ENCODE measurements at regions of chr14 and their contacts with region 1.

Region 1: GRCh38 chr14:20855652-20856291 is 35.4 kb upstream of the RNASE3 start:
- DNase-seq: peak; percentile 84
- ATAC-seq: peak; percentile 99
- H3K4me3 ChIP-seq: no peak overlapping the region
- H3K4me3 Mint-ChIP-seq: no peak overlapping the region
- H3K27ac ChIP-seq: no peak overlapping the region
- H3K27ac Mint-ChIP-seq: no peak overlapping the region
- H3K4me1 ChIP-seq: peaks cover 3 to 7% of the 10 kb centered on the region in 2 donors
- H3K4me1 Mint-ChIP-seq: peaks cover 11% of the 10 kb centered on the region
- H3K27me3 ChIP-seq: peaks cover 0 to 18% (median 12%) of the 10 kb centered on the region in 4 experiments
- H3K27me3 Mint-ChIP-seq: peaks cover 30% of the 10 kb centered on the region
- CTCF ChIP-seq: peak; percentile 86

Region 2: DNA sequence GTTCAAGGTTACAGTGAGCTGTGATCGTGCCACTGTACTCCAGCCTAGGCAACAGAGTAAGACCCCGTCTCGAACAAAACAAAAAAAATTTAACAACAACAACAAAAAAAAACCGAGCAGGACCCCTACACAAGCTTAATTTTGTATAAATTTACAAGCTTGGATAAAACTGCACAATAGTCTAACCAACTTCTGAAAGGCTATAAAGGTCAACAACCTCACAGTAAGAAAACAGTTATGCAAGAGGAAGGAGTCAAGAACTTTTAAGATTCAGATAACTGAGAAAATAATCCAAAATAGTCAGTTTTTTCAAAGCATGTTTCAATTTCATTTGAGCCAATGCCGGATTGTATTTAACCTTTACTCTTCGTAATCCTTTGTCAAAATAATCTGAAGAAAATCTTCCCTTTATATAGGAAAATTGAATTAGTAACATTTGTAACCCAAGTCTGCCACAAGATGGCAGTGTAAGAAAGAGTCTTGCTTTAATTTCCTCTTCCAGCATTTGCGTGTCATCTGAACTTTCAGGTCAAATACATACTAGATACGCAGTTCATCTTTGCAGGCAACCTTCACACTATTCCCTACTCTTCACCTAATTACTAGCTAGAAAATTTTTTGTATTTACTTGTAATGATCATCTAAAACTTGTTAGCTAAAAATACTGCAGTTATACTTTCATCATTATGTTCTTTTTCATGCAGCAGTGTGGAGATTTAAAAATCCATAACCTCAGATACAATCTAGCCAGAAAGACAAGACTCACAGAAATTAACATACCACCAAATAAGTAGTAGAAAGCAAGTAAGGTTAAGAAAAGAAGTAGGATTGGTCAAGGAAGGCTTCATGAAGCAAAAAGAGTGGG is 528.5 kb before region 1 on chr14:
- CTCF ChIA-PET with region 1: interaction called, 4 read pairs
- POLR2A ChIA-PET with region 1: no interaction called
- intact Hi-C with region 1: loop called (anchors 5 kb)
- DNase-seq: peak; percentile 81
- ATAC-seq: peak; percentile 67
- H3K4me3 ChIP-seq: no peak overlapping the region
- H3K4me3 Mint-ChIP-seq: peak overlapping the region; percentile 1
- H3K27ac ChIP-seq: no peak overlapping the region
- H3K27ac Mint-ChIP-seq: peak overlapping the region; percentile 33
- H3K4me1 ChIP-seq: peaks cover under 1 to 6% of the 10 kb centered on the region in 2 donors
- H3K4me1 Mint-ChIP-seq: peaks cover 30% of the 10 kb centered on the region
- H3K27me3 ChIP-seq: no peaks in the 10 kb centered on the region
- H3K27me3 Mint-ChIP-seq: no peaks in the 10 kb centered on the region
- CTCF ChIP-seq: peak; percentile 91

Region 3: DNA sequence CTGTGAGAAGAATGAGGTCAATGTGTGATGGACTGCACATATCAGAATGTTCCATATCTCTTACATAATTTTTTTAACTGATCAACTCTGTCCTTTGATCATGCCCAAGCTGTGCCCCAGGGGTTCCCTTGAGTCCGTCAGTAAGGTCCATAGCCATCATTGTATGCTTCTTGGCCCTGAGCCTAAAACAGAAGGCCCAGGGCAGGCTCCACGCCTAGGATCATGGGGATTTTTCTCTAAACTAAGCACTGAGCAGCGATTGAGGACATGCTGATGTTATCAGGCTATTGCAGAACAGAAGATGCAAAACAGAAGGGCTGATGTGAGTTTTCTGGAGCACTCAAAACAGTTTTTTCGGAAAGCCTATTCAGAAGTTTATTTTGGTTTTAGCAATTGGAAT is 315.9 kb before region 1 on chr14:
- CTCF ChIA-PET with region 1: no interaction called
- POLR2A ChIA-PET with region 1: no interaction called
- intact Hi-C with region 1: no loop called
- DNase-seq: no peak
- ATAC-seq: no peak
- H3K4me3 ChIP-seq: no peak overlapping the region
- H3K4me3 Mint-ChIP-seq: no peak overlapping the region
- H3K27ac ChIP-seq: no peak overlapping the region
- H3K27ac Mint-ChIP-seq: no peak overlapping the region
- H3K4me1 ChIP-seq: no peaks in the 10 kb centered on the region
- H3K4me1 Mint-ChIP-seq: no peaks in the 10 kb centered on the region
- H3K27me3 ChIP-seq: no peaks in the 10 kb centered on the region
- H3K27me3 Mint-ChIP-seq: peaks cover 25% of the 10 kb centered on the region
- CTCF ChIP-seq: no peak

Region 4: GRCh38 chr14:20690848-20691523 is 164.8 kb before region 1 on chr14:
- CTCF ChIA-PET with region 1: interaction called, 140 read pairs
- POLR2A ChIA-PET with region 1: no interaction called
- intact Hi-C with region 1: no loop called
- DNase-seq: peak; percentile 83
- ATAC-seq: peak; percentile 97
- H3K4me3 ChIP-seq: no peak overlapping the region
- H3K4me3 Mint-ChIP-seq: no peak overlapping the region
- H3K27ac ChIP-seq: no peak overlapping the region
- H3K27ac Mint-ChIP-seq: no peak overlapping the region
- H3K4me1 ChIP-seq: peaks cover 0 to 3% of the 10 kb centered on the region in 2 donors
- H3K4me1 Mint-ChIP-seq: peaks cover 5% of the 10 kb centered on the region
- H3K27me3 ChIP-seq: no peaks in the 10 kb centered on the region
- H3K27me3 Mint-ChIP-seq: no peaks in the 10 kb centered on the region
- CTCF ChIP-seq: peak; percentile 99

Region 5: DNA sequence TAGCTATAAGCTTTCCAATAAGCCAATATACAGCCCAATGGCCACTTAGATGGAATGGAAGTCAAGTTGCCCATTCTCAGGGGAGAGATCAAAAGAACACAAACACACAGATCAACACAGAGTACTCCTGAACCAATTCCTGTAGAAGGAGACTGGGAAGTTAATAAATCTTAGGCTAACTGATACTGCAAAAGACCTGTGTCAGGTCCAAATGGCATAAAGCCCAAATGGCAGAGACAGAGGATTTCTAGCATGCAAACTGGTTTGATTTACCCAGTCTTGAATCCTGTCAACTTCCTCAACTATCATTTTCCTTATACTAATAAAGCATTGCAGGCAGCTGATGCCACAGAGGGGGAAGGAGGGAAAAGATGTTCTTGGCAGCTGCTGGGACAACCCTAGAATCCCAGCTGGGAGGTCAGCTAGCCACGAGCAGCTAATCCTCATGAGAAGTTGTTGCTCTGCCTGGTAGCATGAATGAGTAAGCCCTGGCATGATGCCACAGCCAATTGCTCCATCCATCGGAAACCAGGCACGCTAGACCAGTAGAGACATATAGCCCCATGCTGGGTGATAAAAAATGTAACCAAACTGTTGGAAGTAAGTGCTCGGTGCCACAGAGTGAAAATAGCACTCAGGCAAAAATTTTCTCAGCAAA is 141.1 kb before region 1 on chr14:
- CTCF ChIA-PET with region 1: interaction called, 15 read pairs
- POLR2A ChIA-PET with region 1: no interaction called
- intact Hi-C with region 1: no loop called
- DNase-seq: no peak
- ATAC-seq: no peak
- H3K4me3 ChIP-seq: peak overlapping the region in 1 of 5 experiments; percentile 27
- H3K4me3 Mint-ChIP-seq: peak overlapping the region; percentile 59
- H3K27ac ChIP-seq: peak overlapping the region; percentile 86 to 87
- H3K27ac Mint-ChIP-seq: peak overlapping the region; percentile 97
- H3K4me1 ChIP-seq: peaks cover 23 to 66% of the 10 kb centered on the region in 2 donors
- H3K4me1 Mint-ChIP-seq: peaks cover 60% of the 10 kb centered on the region
- H3K27me3 ChIP-seq: no peaks in the 10 kb centered on the region
- H3K27me3 Mint-ChIP-seq: no peaks in the 10 kb centered on the region
- CTCF ChIP-seq: no peak

Region 6: DNA sequence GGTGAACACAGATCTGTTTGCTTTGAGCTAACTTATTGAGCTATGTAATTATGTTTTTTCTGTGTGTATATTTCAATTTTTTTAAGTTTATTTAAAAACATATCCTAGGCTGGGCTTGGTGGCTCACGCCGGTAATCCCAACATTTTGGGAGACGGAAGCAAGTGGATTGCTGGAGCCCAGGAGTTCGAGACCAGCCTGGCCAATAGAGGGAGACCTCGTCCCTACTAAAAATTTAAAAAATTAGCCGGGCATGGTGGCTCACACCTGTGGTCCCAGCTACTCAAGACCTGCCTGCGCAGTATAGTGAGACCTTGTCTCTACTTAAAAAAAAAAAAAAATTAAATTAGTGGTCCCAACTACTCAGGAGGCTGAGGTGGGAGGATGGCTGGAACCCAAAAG is 36.9 kb before region 1 on chr14:
- CTCF ChIA-PET with region 1: interaction called, 10 read pairs
- POLR2A ChIA-PET with region 1: no interaction called
- intact Hi-C with region 1: loop called (anchors 1 kb)
- DNase-seq: no peak
- ATAC-seq: no peak
- H3K4me3 ChIP-seq: no peak overlapping the region
- H3K4me3 Mint-ChIP-seq: no peak overlapping the region
- H3K27ac ChIP-seq: no peak overlapping the region
- H3K27ac Mint-ChIP-seq: no peak overlapping the region
- H3K4me1 ChIP-seq: peaks cover 24 to 26% of the 10 kb centered on the region in 2 donors
- H3K4me1 Mint-ChIP-seq: peaks cover 34% of the 10 kb centered on the region
- H3K27me3 ChIP-seq: no peaks in the 10 kb centered on the region
- H3K27me3 Mint-ChIP-seq: peaks cover 18% of the 10 kb centered on the region
- CTCF ChIP-seq: no peak

Region 7: DNA sequence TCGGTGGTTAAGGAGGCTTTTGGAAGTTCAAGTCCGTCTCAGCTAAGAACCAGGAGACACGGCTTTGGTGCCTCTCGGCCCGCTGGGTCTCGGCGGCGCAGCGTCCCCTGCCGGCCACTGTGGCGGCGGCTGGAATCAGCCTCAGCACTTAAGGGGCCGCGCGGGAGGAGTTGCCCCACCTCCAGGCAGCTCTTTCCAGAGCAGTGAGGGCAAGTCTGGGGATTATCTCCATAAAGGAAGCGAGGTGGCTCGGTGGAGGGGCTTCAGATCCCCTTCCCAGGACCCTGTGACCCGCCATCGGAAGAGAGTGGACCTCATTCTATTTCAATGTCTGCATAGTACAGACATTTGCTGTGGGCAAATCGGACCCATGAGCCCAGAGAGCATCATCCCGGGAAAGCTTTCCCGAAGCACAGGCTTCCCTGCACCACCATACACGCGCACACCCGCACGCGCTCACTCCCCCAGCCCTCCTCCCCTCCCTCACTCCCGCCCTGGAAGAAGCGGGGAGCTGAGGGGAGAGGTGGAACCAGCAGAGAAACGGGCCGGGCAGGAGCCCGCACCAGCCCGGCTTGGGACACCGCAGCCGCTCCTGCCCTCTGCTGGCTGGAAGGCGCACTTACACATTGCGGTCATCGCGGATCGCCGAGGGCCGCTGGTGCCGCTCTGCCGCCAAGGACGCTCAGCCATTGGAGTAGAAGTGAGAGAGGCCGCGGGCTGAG is 115.4 kb after region 1 on chr14:
- CTCF ChIA-PET with region 1: interaction called, 46 read pairs
- POLR2A ChIA-PET with region 1: no interaction called
- intact Hi-C with region 1: loop called (anchors 1 kb)
- DNase-seq: peak; percentile 89
- ATAC-seq: peak; percentile 96
- H3K4me3 ChIP-seq: peak overlapping the region; percentile 62 to 76 (median 68)
- H3K4me3 Mint-ChIP-seq: peak overlapping the region; percentile 96
- H3K27ac ChIP-seq: no peak overlapping the region
- H3K27ac Mint-ChIP-seq: peak overlapping the region; percentile 73
- H3K4me1 ChIP-seq: peaks cover 8 to 14% of the 10 kb centered on the region in 2 donors
- H3K4me1 Mint-ChIP-seq: peaks cover 11% of the 10 kb centered on the region
- H3K27me3 ChIP-seq: peaks cover 0 to 43% (median 10%) of the 10 kb centered on the region in 4 experiments
- H3K27me3 Mint-ChIP-seq: peaks cover 63% of the 10 kb centered on the region
- CTCF ChIP-seq: peak; percentile 94